G401 (cell line): ENCODE measurements at regions of chr12 and their contacts with region 1.

Region 1: GRCh38 chr12:541676-542324 is 82.1 kb downstream of the B4GALNT3 start:
- DNase-seq: no peak

Region 2: DNA sequence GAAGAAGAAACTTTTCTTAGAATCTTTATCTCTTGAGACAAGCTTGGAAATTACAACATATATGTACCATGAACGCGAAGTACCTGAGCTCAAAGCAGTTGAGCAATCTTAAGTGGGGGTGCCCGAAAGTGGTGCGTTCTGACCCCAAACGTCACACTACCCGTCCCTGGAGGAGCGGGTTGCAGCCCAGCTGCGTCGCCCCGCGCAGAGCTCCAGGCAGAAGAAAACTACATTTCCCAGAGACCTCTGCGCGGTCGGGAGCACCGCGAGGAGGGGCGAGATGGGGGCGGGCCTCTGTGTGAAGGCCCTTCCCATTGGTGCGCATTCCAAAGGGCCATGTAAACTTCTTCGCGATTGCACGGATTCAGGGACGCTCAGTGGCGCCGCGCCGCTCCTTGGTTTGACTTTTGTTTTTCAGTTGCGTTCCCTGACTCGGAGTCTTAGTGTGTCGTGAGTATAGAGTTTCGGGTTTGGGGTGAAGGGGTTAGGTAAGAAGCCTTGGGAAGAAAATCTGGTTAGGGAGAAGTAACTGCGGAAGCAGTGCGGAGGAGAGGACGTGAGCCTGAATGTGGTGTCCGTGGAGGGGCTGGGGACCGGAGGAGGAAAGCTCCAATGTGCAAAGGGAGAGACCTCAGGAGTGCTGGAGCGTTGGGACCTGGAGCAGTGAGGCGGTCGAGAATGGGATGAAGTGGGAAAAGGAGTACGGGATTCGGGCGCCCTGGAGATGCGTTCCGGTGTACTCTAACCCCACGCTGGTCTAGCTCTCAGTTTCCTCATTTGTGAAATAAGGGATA is 140.4 kb before region 1 on chr12 and contains the start of gene CCDC77:
- in situ Hi-C with region 1: no loop called
- DNase-seq: peak; percentile 96
- total RNA-seq, gene CCDC77: 16.9 and 24.5 TPM in 2 replicates

Region 3: DNA sequence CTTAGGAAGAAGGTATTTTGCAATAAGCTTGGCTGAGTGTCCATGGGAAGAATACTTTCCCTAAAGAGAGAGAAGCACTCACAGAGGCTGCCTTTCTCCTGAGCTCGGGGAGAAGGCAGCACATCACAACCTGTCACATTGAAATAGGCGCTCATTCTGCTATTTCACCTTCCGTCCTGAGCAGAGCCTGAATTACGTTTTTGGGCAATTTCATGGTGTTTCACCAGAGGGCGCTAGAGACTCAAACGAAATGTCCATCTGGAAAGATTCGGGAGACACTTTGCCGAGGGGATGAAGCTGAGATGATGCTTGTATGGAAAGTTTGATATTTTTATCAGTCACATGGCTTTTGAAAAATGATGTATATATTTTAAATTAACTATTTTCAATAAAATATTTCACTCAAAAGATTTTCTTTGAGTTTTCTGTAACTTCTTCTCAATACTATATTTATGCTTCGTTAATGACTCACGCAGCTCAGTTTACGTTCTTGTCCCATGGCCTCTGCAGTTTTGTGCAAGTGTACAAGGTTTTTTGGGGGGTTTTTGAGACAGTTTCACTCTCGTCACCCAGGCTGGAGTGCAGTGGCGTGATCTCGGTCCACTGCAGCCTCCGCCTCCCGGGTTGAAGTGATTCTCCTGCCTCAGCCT is 99.4 kb before region 1 on chr12:
- in situ Hi-C with region 1: loop called (anchors 5 kb)
- DNase-seq: peak; percentile 72

Region 4: GRCh38 chr12:475291-475690 is 66.5 kb before region 1 on chr12:
- in situ Hi-C with region 1: loop called (anchors 5 kb)
- DNase-seq: no peak

Region 5: DNA sequence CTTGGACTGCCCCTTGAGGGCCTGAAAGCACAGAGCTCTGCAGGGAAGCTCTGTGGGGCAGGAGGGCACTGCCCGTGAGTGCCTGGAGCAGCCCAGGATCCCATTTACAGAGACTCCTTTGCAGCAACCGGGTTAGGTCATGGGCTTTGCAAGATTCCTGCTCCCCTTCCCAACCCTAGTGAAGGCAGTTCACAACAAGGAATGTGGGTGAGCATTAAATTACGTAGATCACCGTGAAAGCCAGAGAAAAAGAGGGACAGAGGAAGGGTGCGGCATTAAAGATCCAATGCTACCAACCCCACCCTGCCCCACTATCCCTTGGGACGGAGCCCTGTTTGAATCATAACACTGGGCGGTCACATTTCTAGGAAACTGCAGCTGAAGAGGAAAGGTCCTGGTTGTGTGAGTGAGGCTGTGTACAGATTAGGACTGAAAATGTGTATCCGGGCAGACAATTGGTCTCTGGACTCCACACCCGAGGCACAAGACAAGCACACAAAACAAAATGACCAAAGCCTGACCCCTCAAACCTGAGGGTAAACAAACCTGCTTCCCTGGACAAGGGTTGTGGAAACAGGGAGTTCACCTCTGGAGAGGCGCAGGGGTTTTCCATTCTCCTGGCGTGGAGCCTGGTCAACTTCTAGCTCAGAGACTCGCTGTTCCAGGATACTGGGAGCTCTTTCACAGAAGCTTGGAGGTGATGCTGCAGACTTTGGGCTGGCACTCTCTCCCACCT is 104.7 kb after region 1 on chr12:
- in situ Hi-C with region 1: no loop called
- DNase-seq: peak; percentile 48

Region 6: GRCh38 chr12:751192-751998 is 209.6 kb after region 1 on chr12:
- in situ Hi-C with region 1: no loop called
- DNase-seq: peak; percentile 92